Lower leg skin (tissue), 4 donors: ENCODE measurements at regions of chr9 and their contacts with region 1.

Region 1: GRCh38 chr9:127921557-127922120 is 4.8 kb upstream of the ST6GALNAC4 start:
- DNase-seq: peak in 1 of 2 donors; percentile 96
- H3K4me3 ChIP-seq: no peak overlapping the region
- CTCF ChIP-seq: peak in 1 of 3 donors; percentile 90
- POLR2A ChIP-seq: no peak

Region 2: GRCh38 chr9:127503947-127504782 is 417.5 kb before region 1 on chr9:
- intact Hi-C with region 1: loop called (anchors 10 kb)
- DNase-seq: peak; percentile 80 to 96
- H3K4me3 ChIP-seq: no peak overlapping the region
- CTCF ChIP-seq: peak in 1 of 3 donors; percentile 82
- POLR2A ChIP-seq: no peak

Region 3: DNA sequence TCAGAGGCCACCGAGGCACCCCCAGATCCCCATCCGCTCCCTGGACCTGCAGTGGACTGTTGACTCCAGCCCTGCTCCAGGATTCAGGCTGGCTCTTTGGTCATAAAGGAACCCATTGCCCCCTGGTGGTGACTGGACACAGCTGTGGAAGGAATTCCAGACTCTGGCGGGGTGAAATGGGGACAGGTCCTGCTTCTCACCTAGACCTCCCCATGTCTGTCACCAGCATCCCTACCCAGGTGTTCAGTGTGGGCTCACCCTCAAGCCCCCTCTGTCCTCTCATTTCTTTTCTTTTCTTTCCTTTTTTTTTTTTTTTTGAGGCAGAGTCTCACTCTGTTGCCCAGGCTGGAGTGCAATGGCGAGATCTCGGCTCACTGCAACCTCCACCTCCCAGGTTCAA is 335.1 kb before region 1 on chr9:
- intact Hi-C with region 1: loop called (anchors 5 kb)
- DNase-seq: peak; percentile 85 to 95
- H3K4me3 ChIP-seq: no peak overlapping the region
- CTCF ChIP-seq: peak in 1 of 3 donors; percentile 59
- POLR2A ChIP-seq: no peak

Region 4: GRCh38 chr9:128254855-128255759 is 333.5 kb after region 1 on chr9:
- intact Hi-C with region 1: no loop called
- DNase-seq: peak in 1 of 2 donors; percentile 92
- H3K4me3 ChIP-seq: no peak overlapping the region
- CTCF ChIP-seq: peak in 1 of 3 donors; percentile 61
- POLR2A ChIP-seq: no peak